Activated CD4-positive, alpha-beta T cell treated with anti-CD3 and anti-CD28 coated beads for 36 hours (primary cell): ENCODE measurements at regions of chr7 and their contacts with region 1.

Region 1: DNA sequence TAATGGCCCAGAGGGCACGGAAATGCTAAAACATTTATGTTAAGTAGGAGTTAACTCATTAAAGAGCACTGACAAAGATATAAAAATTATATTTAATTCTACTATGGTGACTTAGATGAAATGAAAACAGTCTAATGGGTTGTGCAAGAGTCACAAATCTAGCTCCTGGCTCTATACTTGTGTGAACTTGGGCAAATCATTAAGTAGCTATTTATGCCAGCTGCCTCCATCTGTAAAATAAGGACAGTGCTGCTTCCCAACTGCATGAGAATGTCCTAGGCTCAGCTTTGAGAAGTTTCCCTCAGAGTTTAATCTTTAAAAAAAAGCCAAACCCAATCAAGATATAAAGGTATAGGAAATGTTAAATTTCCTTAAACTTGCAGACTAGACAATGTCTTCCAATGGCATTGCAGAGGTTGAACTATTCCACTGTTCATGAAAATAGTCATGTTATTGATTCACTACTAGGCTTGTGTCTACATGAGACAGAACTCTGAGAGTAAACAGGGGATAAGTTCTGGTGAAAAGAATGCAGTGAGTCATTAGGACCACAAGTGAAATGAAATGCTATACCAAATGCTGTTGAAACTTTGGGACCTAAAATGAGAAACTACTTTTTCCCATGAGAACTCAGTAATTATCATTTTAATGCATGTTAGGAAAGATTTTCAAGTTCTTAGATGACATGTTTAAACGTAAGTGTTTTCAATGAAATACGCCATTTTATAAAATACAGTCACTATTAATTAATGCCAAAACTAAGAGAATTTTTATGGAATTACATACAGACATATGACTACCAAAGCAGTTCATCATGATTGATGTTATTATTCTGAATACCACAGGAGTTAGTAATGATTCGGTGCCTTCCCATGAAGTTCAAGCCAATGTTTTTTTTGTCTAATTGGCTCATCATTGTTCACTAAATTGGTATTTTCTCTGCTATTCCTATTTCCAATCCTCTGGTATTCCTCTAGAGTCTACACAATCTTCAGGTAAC is 84.2 kb downstream of the CDK6 start:
- DNase-seq: no peak
- ATAC-seq: peak; percentile 75
- H3K4me3 Mint-ChIP-seq: no peak overlapping the region
- H3K27ac Mint-ChIP-seq: peak overlapping the region; percentile 68
- H3K4me1 Mint-ChIP-seq: peaks cover 66% of the 10 kb centered on the region
- H3K27me3 Mint-ChIP-seq: no peaks in the 10 kb centered on the region

Region 2: DNA sequence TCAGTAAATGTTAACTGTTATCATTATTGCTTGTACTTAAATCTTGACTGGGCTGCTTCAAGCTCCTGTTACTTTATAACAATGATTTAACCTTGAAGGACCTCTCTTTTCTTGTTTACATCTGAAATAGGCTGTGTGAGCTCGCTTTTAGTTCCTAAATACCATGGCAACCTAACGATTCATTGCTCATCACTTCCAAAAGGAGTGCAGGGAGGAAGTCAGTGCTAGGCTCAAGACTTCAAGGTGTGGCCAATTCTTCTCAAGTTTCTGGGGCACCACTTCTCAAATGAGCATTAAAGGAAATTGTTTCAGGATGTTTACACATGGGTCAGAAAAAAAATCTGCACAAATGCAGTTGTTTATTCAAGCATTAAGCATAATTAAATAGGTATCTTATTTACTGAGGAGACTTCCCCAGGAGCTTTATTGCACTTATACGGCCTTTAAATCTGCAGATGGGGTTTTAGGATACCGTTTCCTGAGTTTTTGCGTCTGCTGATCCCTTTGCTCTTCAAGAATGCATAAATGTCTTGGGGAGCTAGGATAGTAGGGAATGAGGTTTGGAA is 1155.8 kb before region 1 on chr7:
- CTCF ChIA-PET with region 1: no interaction called
- POLR2A ChIA-PET with region 1: no interaction called
- intact Hi-C with region 1: no loop called
- DNase-seq: no peak
- ATAC-seq: no peak
- H3K4me3 Mint-ChIP-seq: no peak overlapping the region
- H3K27ac Mint-ChIP-seq: no peak overlapping the region
- H3K4me1 Mint-ChIP-seq: no peaks in the 10 kb centered on the region
- H3K27me3 Mint-ChIP-seq: no peaks in the 10 kb centered on the region

Region 3: DNA sequence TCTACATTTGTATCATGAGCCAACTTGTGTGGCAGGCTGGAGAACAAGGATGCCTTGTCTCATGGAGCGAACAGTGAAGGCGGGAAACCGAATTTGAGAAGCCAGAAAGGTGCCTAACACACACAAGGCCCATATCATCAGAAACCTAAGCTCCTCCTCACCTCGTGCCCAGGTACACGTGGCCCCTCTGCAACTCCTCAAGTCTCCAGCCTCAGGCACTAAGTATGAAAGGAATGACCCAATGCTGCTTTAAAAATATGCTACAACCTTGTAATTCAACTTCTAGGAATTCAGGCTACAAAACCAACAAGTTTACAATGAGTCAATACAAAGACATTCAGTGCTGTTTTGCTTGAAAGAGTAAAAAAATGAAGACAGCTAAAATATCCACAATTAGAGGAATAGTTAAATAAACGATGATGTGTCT is 11.5 kb before region 1 on chr7:
- CTCF ChIA-PET with region 1: no interaction called
- POLR2A ChIA-PET with region 1: no interaction called
- intact Hi-C with region 1: loop called in 1 of 2 experiments (anchors 1 kb)
- DNase-seq: no peak
- ATAC-seq: no peak
- H3K4me3 Mint-ChIP-seq: no peak overlapping the region
- H3K27ac Mint-ChIP-seq: no peak overlapping the region
- H3K4me1 Mint-ChIP-seq: peaks cover 59% of the 10 kb centered on the region
- H3K27me3 Mint-ChIP-seq: no peaks in the 10 kb centered on the region

Region 4: GRCh38 chr7:92768501-92769393 is 16.5 kb after region 1 on chr7:
- CTCF ChIA-PET with region 1: interaction called, 4 read pairs
- POLR2A ChIA-PET with region 1: no interaction called
- intact Hi-C with region 1: loop called in 1 of 2 experiments (anchors 2 kb)
- DNase-seq: peak; percentile 61
- ATAC-seq: peak; percentile 95
- H3K4me3 Mint-ChIP-seq: peak overlapping the region; percentile 21
- H3K27ac Mint-ChIP-seq: peak overlapping the region; percentile 89
- H3K4me1 Mint-ChIP-seq: peaks cover 67% of the 10 kb centered on the region
- H3K27me3 Mint-ChIP-seq: no peaks in the 10 kb centered on the region

Region 5: DNA sequence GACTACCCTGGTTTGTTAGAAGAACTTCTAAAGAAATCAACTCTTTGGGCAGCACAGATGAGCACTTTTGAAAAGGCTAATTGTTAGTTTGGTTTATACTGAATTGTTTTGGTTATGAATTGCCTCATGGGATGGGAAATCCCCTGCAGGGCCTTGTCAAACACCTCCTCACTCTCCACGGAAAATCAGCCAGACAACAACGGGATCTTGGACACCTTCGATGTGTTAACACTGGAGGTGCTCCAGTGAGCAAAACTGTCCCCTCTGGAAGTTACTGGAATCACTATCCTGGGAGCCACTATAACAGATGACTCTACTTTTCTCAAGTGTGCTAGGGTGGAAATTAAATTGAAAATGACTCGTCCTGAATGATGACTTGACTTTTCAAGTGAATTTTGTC is 45.5 kb after region 1 on chr7:
- CTCF ChIA-PET with region 1: no interaction called
- POLR2A ChIA-PET with region 1: no interaction called
- intact Hi-C with region 1: loop called in 1 of 2 experiments (anchors 5 kb)
- DNase-seq: peak; percentile 50
- ATAC-seq: peak; percentile 81
- H3K4me3 Mint-ChIP-seq: no peak overlapping the region
- H3K27ac Mint-ChIP-seq: no peak overlapping the region
- H3K4me1 Mint-ChIP-seq: peaks cover 34% of the 10 kb centered on the region
- H3K27me3 Mint-ChIP-seq: no peaks in the 10 kb centered on the region